ENCODE measurements at regions of chr15 and their contacts with region 1.

Region 1: DNA sequence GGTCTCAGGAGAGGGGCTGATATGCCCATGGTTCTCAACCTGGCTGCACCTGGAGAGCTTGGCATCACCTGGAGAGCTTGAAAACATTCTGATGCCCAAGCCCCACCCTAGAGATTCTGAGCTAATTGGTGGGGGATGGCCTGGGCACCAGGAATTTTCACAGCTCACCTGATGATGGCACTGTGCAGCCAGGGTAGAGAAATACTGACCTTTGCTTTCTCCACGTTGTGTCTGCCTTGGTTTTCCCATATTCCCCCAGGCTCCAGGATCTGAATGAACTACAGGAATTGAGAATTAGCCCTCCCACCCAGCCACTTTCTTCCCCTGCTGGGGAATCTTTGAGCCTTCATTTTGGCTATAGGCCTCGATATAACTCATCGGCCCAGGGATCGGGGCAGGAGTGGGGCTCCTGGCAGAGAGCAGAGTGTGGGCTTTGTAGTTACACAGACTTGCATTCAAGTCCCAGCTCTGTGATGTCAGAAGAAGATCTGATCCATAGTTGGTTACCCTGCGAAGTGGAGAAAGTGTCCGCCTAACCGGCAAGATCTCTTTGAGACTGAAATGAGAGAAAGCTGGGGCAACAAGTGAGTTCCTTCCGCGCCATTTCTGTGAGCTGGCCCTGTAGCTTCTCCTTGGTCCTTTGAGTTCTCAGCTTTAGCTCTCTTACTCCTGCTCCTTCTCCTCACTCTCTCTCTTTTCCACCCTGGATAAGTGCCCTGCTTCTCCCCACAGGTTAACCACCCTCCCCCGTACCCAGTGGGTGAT is 33.1 kb upstream of the UBE2Q2 start:
- DNase-seq: no peak

Region 2: DNA sequence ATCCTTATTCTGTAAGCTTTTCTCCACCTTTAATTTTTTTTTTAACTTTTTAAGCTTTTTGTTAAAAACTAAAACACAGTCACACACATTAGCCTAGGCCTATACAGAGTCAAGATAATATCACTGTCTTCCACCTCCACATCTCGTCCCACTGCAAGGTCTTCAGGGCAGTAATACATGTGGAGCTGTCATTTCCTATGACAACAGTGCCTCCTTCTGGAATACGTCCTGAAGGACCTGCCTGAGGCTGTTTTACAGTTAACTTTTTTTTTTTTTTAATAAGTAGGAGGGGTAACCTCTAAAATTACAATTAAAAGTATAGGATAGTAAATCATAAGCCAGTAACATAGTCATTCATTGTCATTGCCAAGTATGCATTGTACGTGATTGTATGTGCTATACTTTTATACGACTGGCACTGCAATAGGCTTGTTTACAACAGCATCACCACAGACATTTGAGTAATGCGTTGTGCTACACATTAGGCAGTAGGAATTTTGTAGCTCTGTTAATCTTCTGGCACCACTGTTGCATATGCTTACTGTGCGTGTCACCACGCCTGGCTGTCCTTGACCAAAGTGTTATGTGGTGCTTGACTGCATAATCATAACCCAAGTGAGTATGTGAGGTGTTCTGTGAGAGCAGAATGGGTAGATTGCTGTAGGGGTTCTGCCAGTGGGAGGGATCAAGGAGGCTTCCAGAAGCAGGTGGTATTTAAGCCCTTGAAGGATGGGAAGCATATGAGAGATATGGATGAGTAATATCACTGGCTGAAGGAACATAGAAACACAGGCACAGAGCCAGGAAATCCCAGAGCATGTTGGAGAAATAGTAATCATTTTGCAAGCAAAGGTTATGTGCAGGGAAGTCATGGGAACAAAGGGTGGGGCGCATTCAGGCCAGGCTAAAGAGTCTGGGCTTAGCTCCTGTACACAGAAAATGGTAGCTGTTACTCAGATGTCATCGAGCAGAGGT is 111.8 kb after region 1 on chr15:
- intact Hi-C with region 1: loop called (anchors 5 kb)
- DNase-seq: no peak

Region 3: DNA sequence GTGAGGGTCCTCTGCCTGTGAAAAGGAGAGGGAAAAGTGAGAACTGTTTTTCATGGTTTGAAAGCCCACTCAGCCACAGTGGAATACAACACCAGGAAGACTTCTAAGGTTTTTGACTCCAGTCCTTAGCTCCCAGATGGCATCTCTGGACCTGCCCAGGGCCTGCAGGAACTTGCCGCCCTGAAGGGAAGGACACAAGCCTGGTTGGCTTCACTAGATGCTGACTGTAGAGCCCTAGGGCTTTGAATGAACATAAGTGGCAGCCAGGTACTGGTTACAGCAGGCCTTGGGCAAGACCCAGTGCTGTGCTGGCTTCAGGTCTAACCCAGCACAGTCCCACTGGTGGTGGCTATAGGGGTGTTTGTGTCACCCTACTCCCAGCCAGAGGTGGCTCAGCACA is 228.3 kb after region 1 on chr15:
- intact Hi-C with region 1: no loop called
- DNase-seq: no peak

Region 4: GRCh38 chr15:76139368-76140073 is 329.4 kb after region 1 on chr15:
- intact Hi-C with region 1: loop called (anchors 10 kb)
- DNase-seq: no peak

Measured in cardiac septum (tissue), 1 donor.